Caco-2 (cell line): ENCODE measurements at regions of chr10 and their contacts with region 1.

Region 1: GRCh38 chr10:15879058-15879457 is 18.8 kb upstream of the MINDY3 start:
- DNase-seq: peak in 1 of 2 experiments; percentile 36
- H3K4me3 ChIP-seq: no peak overlapping the region
- H3K4me3 Mint-ChIP-seq: no peak overlapping the region
- H3K27ac Mint-ChIP-seq: no peak overlapping the region
- H3K4me1 ChIP-seq: no peaks in the 10 kb centered on the region
- H3K4me1 Mint-ChIP-seq: no peaks in the 10 kb centered on the region
- H3K27me3 ChIP-seq: no peaks in the 10 kb centered on the region
- H3K27me3 Mint-ChIP-seq: peaks cover 20% of the 10 kb centered on the region
- CTCF ChIP-seq: peak; percentile 64 to 74

Region 2: GRCh38 chr10:16155834-16156233 is 276.8 kb after region 1 on chr10:
- CTCF ChIA-PET with region 1: no interaction called
- POLR2A ChIA-PET with region 1: no interaction called
- intact Hi-C with region 1: loop called (anchors 1 kb)
- DNase-seq: no peak
- H3K4me3 ChIP-seq: no peak overlapping the region
- H3K4me3 Mint-ChIP-seq: no peak overlapping the region
- H3K27ac Mint-ChIP-seq: no peak overlapping the region
- H3K4me1 ChIP-seq: peaks cover 4% of the 10 kb centered on the region; the same call in 1 of the 2 replicates
- H3K4me1 Mint-ChIP-seq: peaks cover 8% of the 10 kb centered on the region
- H3K27me3 ChIP-seq: no peaks in the 10 kb centered on the region
- H3K27me3 Mint-ChIP-seq: peaks cover 20% of the 10 kb centered on the region
- CTCF ChIP-seq: no peak

Region 3: DNA sequence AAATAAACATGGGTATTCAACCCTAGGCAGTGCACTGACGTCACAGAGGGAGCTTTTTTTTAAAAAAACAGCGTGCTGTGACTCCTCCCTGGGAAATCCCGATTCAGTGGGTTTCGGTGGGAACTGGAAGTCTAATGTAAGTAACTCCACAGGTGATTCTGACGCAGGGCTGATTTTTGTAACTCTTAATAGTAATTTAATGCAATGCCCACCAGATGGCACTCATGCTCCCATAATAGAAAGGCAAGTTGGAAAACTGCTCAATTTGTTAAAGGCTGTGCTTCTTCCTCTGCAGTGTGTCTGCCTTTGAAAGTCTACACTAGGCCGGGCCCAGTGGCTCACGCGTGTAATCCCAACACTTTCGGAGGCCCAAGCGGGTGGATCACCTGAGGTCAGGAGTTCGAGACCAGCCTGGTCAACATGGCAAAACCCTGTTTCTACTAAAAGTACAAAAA is 949.1 kb after region 1 on chr10:
- CTCF ChIA-PET with region 1: no interaction called
- POLR2A ChIA-PET with region 1: no interaction called
- intact Hi-C with region 1: loop called (anchors 1 kb)
- DNase-seq: peak; percentile 66 to 75
- H3K4me3 ChIP-seq: no peak overlapping the region
- H3K4me3 Mint-ChIP-seq: no peak overlapping the region
- H3K27ac Mint-ChIP-seq: no peak overlapping the region
- H3K4me1 ChIP-seq: no peaks in the 10 kb centered on the region
- H3K4me1 Mint-ChIP-seq: no peaks in the 10 kb centered on the region
- H3K27me3 ChIP-seq: no peaks in the 10 kb centered on the region
- H3K27me3 Mint-ChIP-seq: peaks cover 3% of the 10 kb centered on the region
- CTCF ChIP-seq: peak; percentile 63 to 78